ENCODE measurements at regions of chr11 and their contacts with region 1.

Region 1: GRCh38 chr11:43708776-43709175 is 28.2 kb downstream of the HSD17B12 start:
- DNase-seq: no peak
- ATAC-seq: peak in 1 of 2 donors; percentile 60
- H3K4me3 ChIP-seq: no peak overlapping the region
- H3K27ac ChIP-seq: no peak overlapping the region
- H3K4me1 ChIP-seq: no peaks in the 10 kb centered on the region
- H3K27me3 ChIP-seq: no peaks in the 10 kb centered on the region
- CTCF ChIP-seq: peak in 4 of 5 experiments; percentile 9 to 57 (median 38)
- POLR2A ChIP-seq: no peak

Region 2: GRCh38 chr11:43573233-43573632 is 135.5 kb before region 1 on chr11:
- in situ Hi-C with region 1: loop called in 1 of 4 experiments (anchors 10 kb)
- intact Hi-C with region 1: loop called (anchors 5 kb)
- DNase-seq: no peak
- ATAC-seq: no peak
- H3K4me3 ChIP-seq: no peak overlapping the region
- H3K27ac ChIP-seq: no peak overlapping the region
- H3K4me1 ChIP-seq: peaks cover 27 to 39% of the 10 kb centered on the region in 2 donors
- H3K27me3 ChIP-seq: peaks cover 43 to 54% (median 51%) of the 10 kb centered on the region in 3 donors
- CTCF ChIP-seq: peak in 2 of 5 experiments; percentile 12 to 34
- POLR2A ChIP-seq: no peak

Region 3: DNA sequence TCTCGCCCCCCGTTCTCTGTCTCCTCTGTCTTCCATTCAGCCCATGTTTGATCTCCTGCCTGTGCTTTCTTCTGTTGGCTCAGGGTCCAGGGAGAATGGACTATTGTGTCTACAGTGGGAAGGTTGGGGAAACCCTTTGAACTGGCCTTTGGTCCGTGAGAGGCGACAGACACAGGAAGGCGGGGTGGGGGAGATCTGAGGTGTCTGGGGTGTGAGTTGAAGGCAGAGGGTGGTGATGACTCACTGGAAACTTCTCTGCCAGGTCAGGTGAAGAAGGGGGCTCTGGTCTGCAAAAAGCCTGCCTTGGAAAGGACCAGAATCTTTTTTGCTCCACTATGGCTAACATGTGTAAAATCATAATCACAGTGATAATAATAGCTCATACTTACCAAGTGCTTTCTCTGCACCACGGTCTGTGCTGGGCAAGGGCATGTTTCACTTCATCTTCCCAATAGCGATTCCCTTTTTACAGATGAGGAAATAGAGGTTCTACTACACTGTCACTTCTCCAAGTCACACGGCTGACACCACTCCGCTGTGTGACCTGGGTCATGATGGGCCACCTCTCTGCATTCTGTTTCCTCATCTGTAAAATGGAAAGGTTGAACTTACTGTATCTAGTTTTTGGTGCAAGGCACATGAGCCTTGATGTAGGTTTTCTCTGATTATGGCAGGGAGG is 700.9 kb after region 1 on chr11:
- in situ Hi-C with region 1: no loop called
- intact Hi-C with region 1: no loop called
- DNase-seq: no peak
- ATAC-seq: no peak
- H3K4me3 ChIP-seq: no peak overlapping the region
- H3K27ac ChIP-seq: no peak overlapping the region
- H3K4me1 ChIP-seq: no peaks in the 10 kb centered on the region
- H3K27me3 ChIP-seq: peaks cover 4 to 7% (median 4%) of the 10 kb centered on the region in 3 donors
- CTCF ChIP-seq: no peak
- POLR2A ChIP-seq: no peak

Measured in gastrocnemius medialis (tissue), 4 donors.